Gastrocnemius medialis (tissue), 4 donors: ENCODE measurements at regions of chr5 and their contacts with region 1.

Region 1: GRCh38 chr5:160119142-160119904 is at the start of gene PWWP2A:
- DNase-seq: peak; percentile 99 to 100
- ATAC-seq: peak; percentile 96 to 98
- H3K4me3 ChIP-seq: peak within 1 kb of the TSS; percentile 70 to 98 (median 94)
- H3K27ac ChIP-seq: peak within 1 kb of the TSS; percentile 85 to 99 (median 98)
- H3K4me1 ChIP-seq: peaks cover 8 to 15% of the 10 kb centered on the region in 2 donors
- H3K27me3 ChIP-seq: no peaks in the 10 kb centered on the region
- CTCF ChIP-seq: peak in 2 of 5 experiments; percentile 11 to 32
- POLR2A ChIP-seq: peak; percentile 76 to 82
- total RNA-seq, gene PWWP2A: 5.4 to 13.3 (median 8.6) TPM

Region 2: DNA sequence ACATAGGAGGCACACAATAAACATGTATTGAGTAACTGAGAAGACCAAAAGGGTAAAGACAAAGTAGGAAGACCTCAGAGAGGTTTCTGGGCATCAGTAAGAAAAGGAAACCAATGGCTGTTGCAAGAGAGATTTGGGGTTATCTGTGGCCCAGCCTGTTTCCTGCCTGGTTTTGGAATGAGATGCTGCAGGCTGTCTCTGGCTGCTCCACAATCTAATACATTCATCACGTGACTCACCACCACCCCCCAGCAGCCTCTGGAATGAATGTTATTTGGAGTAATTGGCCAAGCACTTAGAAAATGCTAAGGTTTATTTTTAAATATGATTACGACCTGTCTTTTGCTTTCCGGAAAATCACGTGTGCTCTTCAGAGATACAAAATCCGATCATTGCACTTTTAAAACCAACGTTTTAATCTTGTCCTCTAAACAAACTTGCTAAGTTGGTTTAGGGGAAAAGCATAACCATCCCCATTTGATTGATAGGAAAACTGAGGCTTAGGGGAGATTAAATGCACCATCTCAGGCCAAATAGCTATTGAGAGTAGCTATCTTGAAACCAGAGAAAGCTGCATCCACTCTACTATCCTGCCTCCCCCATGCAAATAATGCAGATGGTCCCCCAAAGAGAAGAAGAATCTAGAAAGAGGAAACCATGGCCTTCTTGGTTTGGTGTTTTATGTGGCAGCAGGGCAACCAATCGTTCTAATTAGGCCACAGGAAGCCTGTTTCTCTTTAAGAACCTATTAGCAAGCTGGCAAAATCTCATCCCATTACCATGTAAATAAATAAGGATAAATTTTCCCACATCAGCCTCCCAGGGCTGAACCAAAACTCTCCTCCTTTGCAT is 354.8 kb before region 1 on chr5:
- in situ Hi-C with region 1: no loop called
- intact Hi-C with region 1: no loop called
- DNase-seq: no peak
- ATAC-seq: no peak
- H3K4me3 ChIP-seq: no peak overlapping the region
- H3K27ac ChIP-seq: no peak overlapping the region
- H3K4me1 ChIP-seq: peaks cover 0 to 4% of the 10 kb centered on the region in 2 donors
- H3K27me3 ChIP-seq: no peaks in the 10 kb centered on the region
- CTCF ChIP-seq: no peak
- POLR2A ChIP-seq: no peak

Region 3: DNA sequence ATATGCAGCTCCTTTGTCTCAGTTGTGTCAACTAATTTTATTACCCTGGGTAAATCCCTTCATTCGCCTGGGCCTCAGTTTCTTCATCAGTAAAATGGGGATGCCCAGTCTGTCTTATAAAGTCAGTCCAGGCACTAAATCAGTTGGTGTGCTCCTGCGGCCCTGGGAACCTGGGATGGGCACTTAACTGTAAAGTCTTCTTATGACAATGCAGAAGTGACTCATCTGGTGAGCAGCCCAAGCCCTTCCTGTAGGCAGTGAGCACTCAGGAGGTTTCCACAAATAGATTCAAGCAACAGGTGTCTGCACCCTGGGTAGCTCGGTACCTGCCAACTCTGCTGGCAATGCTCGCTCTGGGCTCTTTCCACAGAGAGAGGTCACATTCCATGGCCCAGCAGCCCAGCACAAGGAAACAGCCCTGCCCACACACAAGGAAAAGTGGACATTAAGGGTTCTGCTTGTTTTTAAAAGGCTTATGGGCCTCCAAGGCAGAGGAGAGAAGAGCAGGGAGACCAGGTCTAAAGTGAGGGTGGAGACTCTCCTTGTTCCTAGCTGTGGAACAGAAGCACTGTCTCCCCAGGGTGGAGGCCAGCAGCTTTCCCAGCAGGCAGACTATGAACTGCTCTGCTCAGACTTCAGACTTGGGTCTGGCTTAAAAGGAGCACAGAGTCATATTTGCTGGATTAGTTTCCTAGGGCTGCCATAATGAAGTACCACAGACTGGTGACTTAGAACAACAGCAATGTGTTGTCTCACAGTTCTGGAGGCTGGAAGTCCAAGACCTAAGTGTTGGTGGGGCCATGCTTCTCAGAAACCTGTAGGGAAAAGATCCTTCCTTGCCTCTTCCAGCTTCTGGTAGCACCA is 292.7 kb before region 1 on chr5:
- in situ Hi-C with region 1: no loop called
- intact Hi-C with region 1: no loop called
- DNase-seq: peak; percentile 90 to 96
- ATAC-seq: peak; percentile 94 to 97
- H3K4me3 ChIP-seq: no peak overlapping the region
- H3K27ac ChIP-seq: peak overlapping the region; percentile 77 to 90 (median 84)
- H3K4me1 ChIP-seq: peaks cover 28 to 45% of the 10 kb centered on the region in 2 donors
- H3K27me3 ChIP-seq: no peaks in the 10 kb centered on the region
- CTCF ChIP-seq: no peak
- POLR2A ChIP-seq: no peak

Region 4: GRCh38 chr5:160008877-160009590 is 110.3 kb before region 1 on chr5 and contains the start of gene TTC1:
- in situ Hi-C with region 1: no loop called
- intact Hi-C with region 1: loop called (anchors 1 kb)
- DNase-seq: peak; percentile 95
- ATAC-seq: peak; percentile 100
- H3K4me3 ChIP-seq: peak within 1 kb of the TSS; percentile 72 to 92 (median 82)
- H3K27ac ChIP-seq: peak within 1 kb of the TSS; percentile 84 to 88 (median 86)
- H3K4me1 ChIP-seq: peaks cover 10 to 20% of the 10 kb centered on the region in 2 donors
- H3K27me3 ChIP-seq: no peaks in the 10 kb centered on the region
- CTCF ChIP-seq: no peak
- POLR2A ChIP-seq: peak; percentile 74 to 89
- total RNA-seq, gene TTC1: 39.9 to 67.9 (median 56.3) TPM

Region 5: DNA sequence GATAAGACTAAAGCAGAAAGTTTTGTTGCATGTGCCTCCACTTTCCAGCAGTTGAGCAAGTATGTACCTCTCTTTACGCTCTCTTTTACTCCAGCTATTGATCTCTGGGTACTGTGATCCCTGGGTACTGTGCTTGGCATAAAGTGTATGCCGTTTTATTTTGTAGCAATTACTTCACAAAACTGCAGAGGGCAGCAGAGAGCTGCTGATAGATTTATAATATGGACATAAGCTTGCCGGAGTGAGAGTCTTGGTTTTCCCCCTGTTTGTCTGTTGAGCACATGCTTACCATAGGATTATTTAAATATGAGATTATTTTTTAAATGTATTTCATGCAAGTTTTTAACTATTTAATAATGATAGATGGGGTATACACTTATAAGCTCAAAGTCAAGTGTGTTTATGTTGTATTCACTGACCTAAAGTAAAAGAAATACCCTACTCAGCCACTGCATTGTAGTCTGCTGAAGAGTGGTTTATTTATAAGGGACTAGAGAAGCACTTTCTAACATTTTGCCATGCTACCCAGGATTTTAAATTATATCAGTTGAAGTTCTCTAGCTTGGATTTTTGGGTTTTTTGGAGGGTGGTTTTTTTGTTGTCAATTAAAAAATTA is 97.4 kb before region 1 on chr5:
- in situ Hi-C with region 1: loop called in 1 of 4 experiments (anchors 10 kb)
- intact Hi-C with region 1: loop called (anchors 5 kb)
- DNase-seq: no peak
- ATAC-seq: peak; percentile 89 to 91
- H3K4me3 ChIP-seq: no peak overlapping the region
- H3K27ac ChIP-seq: no peak overlapping the region
- H3K4me1 ChIP-seq: peaks cover 6 to 13% of the 10 kb centered on the region in 2 donors
- H3K27me3 ChIP-seq: no peaks in the 10 kb centered on the region
- CTCF ChIP-seq: peak; percentile 61 to 85 (median 77)
- POLR2A ChIP-seq: no peak

Region 6: GRCh38 chr5:160165137-160166068 is 46.1 kb after region 1 on chr5:
- in situ Hi-C with region 1: no loop called
- intact Hi-C with region 1: loop called (anchors 2 kb)
- DNase-seq: peak; percentile 64 to 79
- ATAC-seq: peak; percentile 76 to 77
- H3K4me3 ChIP-seq: peak overlapping the region in 2 of 4 donors; percentile 14 to 24
- H3K27ac ChIP-seq: peak overlapping the region; percentile 72 to 74 (median 73)
- H3K4me1 ChIP-seq: peaks cover 5 to 9% of the 10 kb centered on the region in 2 donors
- H3K27me3 ChIP-seq: no peaks in the 10 kb centered on the region
- CTCF ChIP-seq: no peak
- POLR2A ChIP-seq: no peak

Region 7: GRCh38 chr5:160353379-160353778 is 234.1 kb after region 1 on chr5:
- in situ Hi-C with region 1: no loop called
- intact Hi-C with region 1: loop called (anchors 5 kb)
- DNase-seq: peak; percentile 69 to 90
- ATAC-seq: peak; percentile 96 to 97
- H3K4me3 ChIP-seq: peak overlapping the region in 3 of 4 donors; percentile 11 to 15 (median 11)
- H3K27ac ChIP-seq: peak overlapping the region; percentile 64 to 84 (median 72)
- H3K4me1 ChIP-seq: peaks cover 24 to 30% of the 10 kb centered on the region in 2 donors
- H3K27me3 ChIP-seq: no peaks in the 10 kb centered on the region
- CTCF ChIP-seq: no peak
- POLR2A ChIP-seq: no peak

Region 8: DNA sequence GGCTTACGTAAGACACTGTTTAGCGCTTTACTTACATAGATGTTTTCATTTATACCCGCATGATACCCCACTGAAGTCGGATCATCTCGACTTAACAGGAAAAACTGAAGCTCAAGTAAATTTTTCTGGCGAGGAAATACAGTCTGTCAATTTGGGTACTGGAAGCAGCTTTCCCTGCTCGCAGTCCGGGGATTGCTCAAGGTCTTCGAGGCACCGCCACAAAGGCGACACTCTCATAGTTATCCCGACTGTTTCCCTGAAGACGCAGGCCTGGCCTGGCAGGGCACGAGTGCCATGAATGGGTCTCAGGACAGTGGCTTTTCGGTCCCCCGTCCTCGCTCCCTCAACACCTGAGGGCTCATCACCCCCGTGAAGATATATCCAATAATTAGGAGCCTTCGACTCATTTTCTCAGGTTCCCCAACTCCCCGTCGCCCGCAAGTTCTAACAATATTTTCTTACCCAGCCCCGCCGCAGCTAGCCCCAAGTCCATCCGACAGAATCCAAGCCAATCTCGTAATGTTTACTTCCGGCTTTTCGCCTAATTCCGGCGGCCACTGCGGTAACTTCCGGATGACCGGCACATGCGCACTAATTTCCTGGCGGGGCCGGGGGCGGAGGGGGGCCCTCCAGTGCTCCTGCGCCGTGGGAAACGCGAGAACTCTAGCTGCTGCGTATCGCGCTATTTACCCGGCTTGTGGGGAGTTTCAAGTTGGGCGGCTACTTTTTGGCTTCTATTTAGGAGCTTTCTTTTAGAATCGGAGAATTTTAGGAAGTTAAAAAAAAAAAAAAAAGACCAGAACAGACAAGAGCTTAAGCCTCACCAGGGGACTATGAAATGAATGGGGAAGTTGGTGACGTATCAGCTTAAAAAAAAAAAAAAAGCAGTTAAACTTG is 299.5 kb after region 1 on chr5 and contains the start of gene SLU7:
- in situ Hi-C with region 1: no loop called
- intact Hi-C with region 1: loop called (anchors 5 kb)
- DNase-seq: peak; percentile 89 to 92
- ATAC-seq: peak; percentile 91 to 94
- H3K4me3 ChIP-seq: peak within 1 kb of the TSS; percentile 66 to 92 (median 84)
- H3K27ac ChIP-seq: peak within 1 kb of the TSS; percentile 87 to 91 (median 88)
- H3K4me1 ChIP-seq: peaks cover 27 to 28% of the 10 kb centered on the region in 2 donors
- H3K27me3 ChIP-seq: no peaks in the 10 kb centered on the region
- CTCF ChIP-seq: no peak
- POLR2A ChIP-seq: peak; percentile 63 to 67
- total RNA-seq, gene SLU7: 61.4 to 103 (median 87.2) TPM

Region 9: DNA sequence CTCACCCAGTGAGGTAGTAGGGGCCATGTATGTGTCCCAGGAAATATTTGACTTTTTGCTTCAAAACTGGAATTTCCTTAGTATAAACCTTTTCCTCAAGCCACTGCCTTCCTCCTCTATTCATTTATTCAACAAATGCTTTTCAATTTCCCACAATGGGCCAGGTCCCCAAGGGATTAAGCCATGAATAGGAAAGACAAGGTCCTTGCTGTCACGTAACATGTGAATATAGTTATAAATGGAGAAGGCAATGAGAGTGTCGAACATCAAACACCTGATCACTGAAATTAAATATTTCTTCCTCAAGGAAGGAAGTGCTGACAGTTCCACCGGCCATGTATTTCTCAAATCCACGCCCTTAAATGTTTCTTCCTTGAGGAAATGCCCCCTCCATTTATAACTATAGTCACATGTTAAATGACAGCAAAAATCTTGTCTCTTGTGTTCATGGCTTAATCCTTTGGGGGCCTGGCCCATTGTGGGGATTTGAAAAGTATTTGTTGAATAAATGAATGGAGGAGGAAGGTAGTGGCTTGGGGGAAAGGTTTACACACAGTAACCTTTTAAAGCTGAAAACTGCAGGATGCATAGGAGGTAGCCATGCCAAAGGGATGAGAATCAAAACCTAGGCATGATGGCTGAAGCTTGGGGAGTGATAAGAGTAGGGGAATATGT is 447.8 kb after region 1 on chr5:
- in situ Hi-C with region 1: no loop called
- intact Hi-C with region 1: no loop called
- DNase-seq: no peak
- ATAC-seq: no peak
- H3K4me3 ChIP-seq: no peak overlapping the region
- H3K27ac ChIP-seq: no peak overlapping the region
- H3K4me1 ChIP-seq: no peaks in the 10 kb centered on the region
- H3K27me3 ChIP-seq: no peaks in the 10 kb centered on the region
- CTCF ChIP-seq: no peak
- POLR2A ChIP-seq: no peak